ENCODE measurements at regions of chr7 and their contacts with region 1.

Region 1: DNA sequence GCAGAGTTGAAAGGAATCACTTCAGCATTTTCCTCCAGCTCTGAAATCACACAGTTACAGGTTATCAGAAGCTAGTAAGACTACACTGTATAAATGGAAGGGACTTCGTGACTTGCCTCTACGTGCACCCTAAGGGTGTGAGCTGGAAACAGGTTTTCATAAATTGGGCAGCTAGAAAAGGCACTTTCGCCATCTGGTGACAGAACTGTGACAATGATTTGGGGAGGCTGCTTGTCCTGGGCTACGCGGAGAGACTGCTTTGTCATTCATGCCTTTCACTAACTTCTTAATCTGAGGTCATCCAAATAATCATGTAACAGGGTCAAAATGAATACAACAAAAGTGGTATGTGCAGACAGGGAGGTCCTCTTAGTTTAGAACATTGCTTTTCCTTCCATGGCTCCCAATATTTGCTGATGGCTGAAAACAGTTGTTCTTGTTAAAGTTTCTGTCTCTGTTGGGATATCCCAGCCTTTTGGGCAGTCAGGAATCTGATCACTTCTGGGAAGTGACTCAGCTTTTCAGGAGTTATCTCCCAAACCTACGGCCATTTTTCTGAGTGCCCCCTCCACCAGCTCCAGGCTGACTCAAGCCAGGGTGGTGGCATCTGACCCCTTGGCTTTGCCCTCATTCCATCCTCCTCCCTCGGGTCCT is 17.8 kb downstream of the VWC2 start:
- DNase-seq: peak; percentile 34
- H3K4me3 ChIP-seq: no peak overlapping the region
- H3K27ac ChIP-seq: no peak overlapping the region
- H3K4me1 ChIP-seq: no peaks in the 10 kb centered on the region
- H3K27me3 ChIP-seq: no peaks in the 10 kb centered on the region
- CTCF ChIP-seq: peak; percentile 50

Region 2: GRCh38 chr7:49001610-49002033 is 789.6 kb before region 1 on chr7:
- intact Hi-C with region 1: loop called (anchors 5 kb)
- DNase-seq: peak; percentile 37
- H3K4me3 ChIP-seq: no peak overlapping the region
- H3K27ac ChIP-seq: no peak overlapping the region
- H3K4me1 ChIP-seq: no peaks in the 10 kb centered on the region
- H3K27me3 ChIP-seq: no peaks in the 10 kb centered on the region
- CTCF ChIP-seq: peak; percentile 45

Region 3: GRCh38 chr7:49483142-49483541 is 308.1 kb before region 1 on chr7:
- intact Hi-C with region 1: loop called (anchors 5 kb)
- DNase-seq: peak; percentile 38
- H3K4me3 ChIP-seq: no peak overlapping the region
- H3K27ac ChIP-seq: no peak overlapping the region
- H3K4me1 ChIP-seq: no peaks in the 10 kb centered on the region
- H3K27me3 ChIP-seq: no peaks in the 10 kb centered on the region
- CTCF ChIP-seq: peak; percentile 16

Region 4: GRCh38 chr7:49732506-49732905 is 58.7 kb before region 1 on chr7:
- intact Hi-C with region 1: no loop called
- DNase-seq: no peak
- H3K4me3 ChIP-seq: no peak overlapping the region
- H3K27ac ChIP-seq: no peak overlapping the region
- H3K4me1 ChIP-seq: no peaks in the 10 kb centered on the region
- H3K27me3 ChIP-seq: no peaks in the 10 kb centered on the region
- CTCF ChIP-seq: no peak

Region 5: GRCh38 chr7:49995681-49996080 is 204.5 kb after region 1 on chr7:
- intact Hi-C with region 1: no loop called
- DNase-seq: no peak
- H3K4me3 ChIP-seq: no peak overlapping the region
- H3K27ac ChIP-seq: no peak overlapping the region
- H3K4me1 ChIP-seq: no peaks in the 10 kb centered on the region
- H3K27me3 ChIP-seq: no peaks in the 10 kb centered on the region
- CTCF ChIP-seq: no peak